Left colon (tissue), 2 donors: ENCODE measurements at regions of chr4 and their contacts with region 1.

Region 1: DNA sequence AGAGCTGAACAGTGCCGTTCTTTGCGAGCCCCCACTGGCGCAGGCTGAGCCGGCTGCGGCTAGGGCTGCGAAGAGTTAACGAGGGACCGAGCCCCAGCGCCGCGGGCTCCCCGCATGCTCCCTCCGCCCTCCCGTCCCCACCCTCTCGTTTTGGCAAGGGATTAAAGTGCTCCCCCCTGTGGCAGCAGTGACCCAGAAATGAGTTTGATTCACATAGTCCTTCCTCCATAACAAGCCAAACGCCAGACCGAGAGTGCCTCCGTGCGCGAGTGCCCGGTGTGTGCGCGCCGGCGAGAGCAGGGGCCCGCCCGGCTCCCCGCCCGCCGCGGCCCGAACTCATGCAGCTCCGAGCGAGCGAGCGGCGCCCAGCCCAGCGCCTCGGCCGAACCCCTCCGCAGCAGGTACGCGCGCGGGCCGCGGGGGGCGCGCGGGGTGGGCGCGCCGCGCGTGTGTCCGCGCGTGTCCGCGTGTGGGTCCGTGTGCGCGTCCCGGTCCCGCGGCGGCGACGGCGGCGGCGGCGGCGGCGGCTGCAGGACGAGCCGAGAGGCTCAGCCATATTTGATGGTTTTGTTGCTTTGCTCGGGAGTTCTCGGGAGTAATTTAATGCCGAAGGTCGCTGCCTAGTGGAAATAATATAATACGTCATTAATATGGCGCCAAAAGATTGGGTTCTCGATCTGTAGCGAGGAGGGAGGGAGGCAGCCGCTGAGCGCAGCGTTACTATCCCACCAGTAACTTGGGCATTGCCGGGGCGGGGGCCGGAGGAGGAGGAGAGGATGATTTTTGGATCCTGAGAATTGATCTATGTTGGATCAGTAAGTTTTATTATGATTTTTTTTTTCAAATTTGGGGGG is at the start of gene JADE1:
- DNase-seq: peak; percentile 92 to 95
- ATAC-seq: peak; percentile 81
- total RNA-seq, gene JADE1: 5.4 to 8.4 TPM

Region 2: GRCh38 chr4:128454281-128455075 is 355.2 kb before region 1 on chr4:
- intact Hi-C with region 1: loop called in 1 of 2 experiments (anchors 5 kb)
- DNase-seq: peak; percentile 67 to 70
- ATAC-seq: peak; percentile 87

Region 3: GRCh38 chr4:128565565-128566186 is 244.0 kb before region 1 on chr4:
- intact Hi-C with region 1: loop called in 1 of 2 experiments (anchors 10 kb)
- DNase-seq: peak; percentile 49 to 61
- ATAC-seq: peak; percentile 67